Activated CD4-positive, alpha-beta memory T cell treated with anti-CD3 and anti-CD28 coated beads for 36 hours (primary cell): ENCODE measurements at regions of chr14 and their contacts with region 1.

Region 1: DNA sequence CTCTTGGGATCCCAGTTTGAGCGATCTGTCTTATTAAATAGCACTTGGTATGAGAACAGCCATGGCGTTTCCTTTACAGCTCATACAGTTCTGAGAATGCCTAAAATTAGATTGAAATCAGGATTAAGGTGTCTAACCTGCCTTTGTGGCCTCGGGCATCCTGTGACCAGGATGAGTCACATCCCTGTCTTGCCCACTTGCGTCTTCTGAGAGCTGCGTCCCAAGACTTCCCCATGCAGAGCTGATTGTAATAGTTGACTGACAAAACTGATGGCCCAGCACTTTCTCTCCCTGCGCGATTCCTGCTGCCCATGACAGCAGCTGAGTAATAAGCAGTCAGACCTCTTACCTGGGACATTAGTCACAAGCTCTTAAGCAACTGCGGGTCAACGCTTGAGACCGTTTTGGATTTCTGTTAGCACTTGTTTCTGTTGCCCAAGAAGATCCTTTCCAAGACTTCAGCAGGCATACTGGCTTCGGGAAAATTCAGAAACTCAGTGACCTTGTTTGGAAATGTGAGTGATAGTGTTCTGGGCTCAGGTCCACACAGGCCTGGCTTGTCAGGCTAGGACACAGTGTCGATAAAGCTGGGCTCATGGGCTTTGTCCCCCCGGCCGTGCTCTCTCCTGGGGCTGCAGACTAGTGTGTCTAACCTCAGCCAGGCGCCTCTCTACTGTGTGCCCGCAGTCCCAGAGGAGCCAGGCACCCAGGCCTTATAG is 169.9 kb upstream of the HIF1A start:
- DNase-seq: peak; percentile 92
- H3K4me3 Mint-ChIP-seq: peak overlapping the region; percentile 63
- H3K27ac Mint-ChIP-seq: peak overlapping the region; percentile 91
- H3K4me1 Mint-ChIP-seq: peaks cover 88% of the 10 kb centered on the region
- H3K27me3 Mint-ChIP-seq: no peaks in the 10 kb centered on the region

Region 2: DNA sequence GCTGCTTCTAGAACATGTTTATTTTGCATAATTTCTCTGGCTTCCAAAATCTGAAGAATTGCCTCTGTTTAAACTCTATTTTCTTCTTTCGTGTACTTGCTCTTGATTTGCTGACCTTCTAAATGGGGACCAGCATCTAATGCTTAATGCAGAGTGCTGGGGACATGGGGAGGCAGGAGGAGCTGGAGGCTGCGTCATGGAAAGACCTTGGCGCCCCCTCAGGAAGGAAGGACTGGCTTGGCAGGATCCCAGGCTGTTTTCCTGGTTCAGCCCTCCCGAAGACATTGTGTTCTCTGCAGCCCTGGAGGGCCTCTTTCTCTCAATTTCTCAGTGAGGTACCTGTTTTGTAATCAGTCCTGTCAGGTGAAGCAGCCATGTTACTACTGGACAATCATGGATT is 198.6 kb before region 1 on chr14:
- CTCF ChIA-PET with region 1: no interaction called
- POLR2A ChIA-PET with region 1: no interaction called
- intact Hi-C with region 1: loop called (anchors 5 kb)
- DNase-seq: no peak
- H3K4me3 Mint-ChIP-seq: peak overlapping the region; percentile 99
- H3K27ac Mint-ChIP-seq: peak overlapping the region; percentile 93
- H3K4me1 Mint-ChIP-seq: peaks cover 64% of the 10 kb centered on the region
- H3K27me3 Mint-ChIP-seq: no peaks in the 10 kb centered on the region

Region 3: GRCh38 chr14:61512026-61512834 is 13.2 kb before region 1 on chr14:
- CTCF ChIA-PET with region 1: interaction called, 20 read pairs
- POLR2A ChIA-PET with region 1: interaction called, 17 read pairs
- intact Hi-C with region 1: loop called (anchors 1 kb)
- DNase-seq: no peak
- H3K4me3 Mint-ChIP-seq: peak overlapping the region; percentile 51
- H3K27ac Mint-ChIP-seq: peak overlapping the region; percentile 98
- H3K4me1 Mint-ChIP-seq: peaks cover 95% of the 10 kb centered on the region
- H3K27me3 Mint-ChIP-seq: no peaks in the 10 kb centered on the region

Region 4: DNA sequence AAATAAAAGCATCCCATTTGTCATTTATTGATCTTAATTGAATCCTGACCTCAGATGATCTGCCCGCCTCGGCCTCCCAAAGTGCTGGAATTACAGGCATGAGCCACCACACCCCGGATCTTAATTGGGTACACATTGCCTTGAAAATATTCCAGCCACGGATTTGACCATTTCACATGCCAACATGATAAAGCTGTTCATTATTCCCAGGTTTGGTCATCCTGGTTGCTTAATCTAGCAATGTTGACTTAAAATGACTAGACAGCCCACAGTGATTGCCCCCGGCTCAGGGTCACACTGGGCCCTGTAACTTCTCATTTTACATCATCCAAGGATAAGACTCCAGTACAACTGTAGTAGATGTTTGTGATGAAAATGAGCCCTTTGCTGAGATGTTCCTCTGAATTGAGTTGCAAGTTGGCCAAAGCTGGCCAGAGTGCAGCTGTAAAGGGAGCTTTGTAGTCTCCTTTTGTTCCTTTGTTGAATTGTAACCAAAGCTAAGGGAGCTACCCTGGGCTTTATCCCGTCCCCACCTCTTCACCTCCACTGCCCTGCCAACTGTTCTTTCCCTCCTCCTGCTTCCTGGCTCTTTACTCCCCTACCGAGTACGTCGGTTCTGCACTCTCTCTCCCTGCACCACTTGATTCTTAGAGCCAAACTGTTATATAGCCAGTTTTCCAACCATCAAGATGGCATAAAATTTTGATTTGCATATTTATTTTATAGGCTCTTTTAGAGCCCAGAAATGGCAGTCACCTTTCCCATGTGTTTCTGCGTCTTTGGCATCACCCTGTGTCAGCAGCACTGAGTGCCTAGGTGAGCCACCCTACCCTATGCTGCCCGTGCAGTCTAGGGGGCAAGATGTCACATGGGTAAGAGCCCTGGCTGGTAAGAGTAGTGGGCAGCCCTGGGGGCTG is 28.5 kb after region 1 on chr14:
- CTCF ChIA-PET with region 1: no interaction called
- POLR2A ChIA-PET with region 1: interaction called, 5 read pairs
- intact Hi-C with region 1: loop called (anchors 1 kb)
- DNase-seq: no peak
- H3K4me3 Mint-ChIP-seq: no peak overlapping the region
- H3K27ac Mint-ChIP-seq: peak overlapping the region; percentile 97
- H3K4me1 Mint-ChIP-seq: peaks cover 55% of the 10 kb centered on the region
- H3K27me3 Mint-ChIP-seq: no peaks in the 10 kb centered on the region

Region 5: DNA sequence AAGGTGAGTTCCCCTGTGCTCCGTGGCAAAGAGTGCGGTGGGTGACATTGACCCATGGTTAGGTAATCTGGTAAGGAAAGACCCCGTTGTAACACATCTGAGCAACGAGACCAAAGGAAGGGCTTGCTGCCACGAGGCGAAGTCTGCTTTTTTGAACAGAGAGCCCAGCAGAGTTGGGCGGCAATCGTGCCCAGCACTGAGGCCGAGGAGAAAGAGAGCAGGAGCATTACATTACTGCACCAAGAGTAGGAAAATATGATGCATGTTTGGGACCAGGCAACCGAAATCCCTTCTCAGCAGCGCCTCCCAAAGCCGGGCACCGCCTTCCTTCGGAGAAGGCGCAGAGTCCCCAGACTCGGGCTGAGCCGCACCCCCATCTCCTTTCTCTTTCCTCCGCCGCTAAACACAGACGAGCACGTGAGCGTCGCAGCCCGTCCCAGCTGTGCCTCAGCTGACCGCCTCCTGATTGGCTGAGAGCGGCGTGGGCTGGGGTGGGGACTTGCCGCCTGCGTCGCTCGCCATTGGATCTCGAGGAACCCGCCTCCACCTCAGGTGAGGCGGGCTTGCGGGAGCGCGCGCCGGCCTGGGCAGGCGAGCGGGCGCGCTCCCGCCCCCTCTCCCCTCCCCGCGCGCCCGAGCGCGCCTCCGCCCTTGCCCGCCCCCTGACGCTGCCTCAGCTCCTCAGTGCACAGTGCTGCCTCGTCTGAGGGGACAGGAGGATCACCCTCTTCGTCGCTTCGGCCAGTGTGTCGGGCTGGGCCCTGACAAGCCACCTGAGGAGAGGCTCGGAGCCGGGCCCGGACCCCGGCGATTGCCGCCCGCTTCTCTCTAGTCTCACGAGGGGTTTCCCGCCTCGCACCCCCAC is 169.6 kb after region 1 on chr14 and contains the start of gene HIF1A:
- CTCF ChIA-PET with region 1: no interaction called
- POLR2A ChIA-PET with region 1: interaction called, 16 read pairs
- intact Hi-C with region 1: loop called (anchors 1 kb)
- DNase-seq: peak; percentile 99
- H3K4me3 Mint-ChIP-seq: peak within 1 kb of the TSS; percentile 98
- H3K27ac Mint-ChIP-seq: peak within 1 kb of the TSS; percentile 98
- H3K4me1 Mint-ChIP-seq: peaks cover 49% of the 10 kb centered on the region
- H3K27me3 Mint-ChIP-seq: no peaks in the 10 kb centered on the region
- total RNA-seq, gene HIF1A: 283 to 287 TPM